ENCODE measurements at regions of chr6 and their contacts with region 1.

Region 1: DNA sequence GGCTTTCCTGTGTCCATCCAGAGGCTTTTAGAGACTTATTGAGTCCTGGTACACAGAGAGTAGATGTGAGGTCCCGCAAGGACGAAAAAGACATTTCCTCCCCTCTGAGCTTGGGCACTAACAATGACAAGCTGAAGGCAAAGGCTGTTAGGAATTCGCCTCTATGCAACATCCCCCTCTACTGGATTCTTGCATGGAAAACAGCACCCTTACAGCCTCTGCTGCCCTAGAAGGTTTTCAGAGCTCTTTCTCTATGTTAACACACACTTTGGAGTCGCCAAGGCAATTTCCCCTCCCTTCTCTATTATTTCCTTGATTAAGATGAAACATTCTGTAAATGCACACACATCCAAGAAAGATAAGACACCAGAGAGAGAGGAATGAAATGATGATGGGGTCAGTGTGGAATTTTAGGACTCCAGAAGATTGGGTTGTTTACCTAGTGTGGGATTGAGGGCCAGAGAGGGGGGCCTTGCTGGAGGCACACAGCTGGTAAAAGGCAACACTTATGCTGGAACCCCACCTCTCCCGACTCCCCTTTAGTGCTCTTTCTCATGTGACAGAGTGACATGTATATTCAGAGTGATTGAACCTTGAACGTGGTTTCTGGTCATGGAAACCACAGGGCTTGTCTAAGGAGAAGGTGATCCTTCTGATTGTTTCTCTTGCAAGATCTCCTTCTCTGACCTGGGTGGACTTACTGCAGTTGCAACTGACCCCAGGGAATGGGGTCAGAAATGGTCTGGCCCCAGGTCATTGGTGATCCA is 300.7 kb downstream of the CLIC5 start:
- DNase-seq: peak; percentile 62
- ATAC-seq: peak; percentile 37
- H3K4me3 Mint-ChIP-seq: no peak overlapping the region
- H3K27ac Mint-ChIP-seq: peak overlapping the region; percentile 90
- H3K4me1 Mint-ChIP-seq: peaks cover 61% of the 10 kb centered on the region
- H3K27me3 Mint-ChIP-seq: no peaks in the 10 kb centered on the region
- CTCF ChIP-seq: peak; percentile 63

Region 2: GRCh38 chr6:44630125-44631028 is 1084.5 kb before region 1 on chr6:
- CTCF ChIA-PET with region 1: interaction called, 10 read pairs
- POLR2A ChIA-PET with region 1: no interaction called
- intact Hi-C with region 1: no loop called
- DNase-seq: peak; percentile 50
- ATAC-seq: peak; percentile 56
- H3K4me3 Mint-ChIP-seq: no peak overlapping the region
- H3K27ac Mint-ChIP-seq: no peak overlapping the region
- H3K4me1 Mint-ChIP-seq: peaks cover 6% of the 10 kb centered on the region
- H3K27me3 Mint-ChIP-seq: no peaks in the 10 kb centered on the region
- CTCF ChIP-seq: peak; percentile 39

Region 3: DNA sequence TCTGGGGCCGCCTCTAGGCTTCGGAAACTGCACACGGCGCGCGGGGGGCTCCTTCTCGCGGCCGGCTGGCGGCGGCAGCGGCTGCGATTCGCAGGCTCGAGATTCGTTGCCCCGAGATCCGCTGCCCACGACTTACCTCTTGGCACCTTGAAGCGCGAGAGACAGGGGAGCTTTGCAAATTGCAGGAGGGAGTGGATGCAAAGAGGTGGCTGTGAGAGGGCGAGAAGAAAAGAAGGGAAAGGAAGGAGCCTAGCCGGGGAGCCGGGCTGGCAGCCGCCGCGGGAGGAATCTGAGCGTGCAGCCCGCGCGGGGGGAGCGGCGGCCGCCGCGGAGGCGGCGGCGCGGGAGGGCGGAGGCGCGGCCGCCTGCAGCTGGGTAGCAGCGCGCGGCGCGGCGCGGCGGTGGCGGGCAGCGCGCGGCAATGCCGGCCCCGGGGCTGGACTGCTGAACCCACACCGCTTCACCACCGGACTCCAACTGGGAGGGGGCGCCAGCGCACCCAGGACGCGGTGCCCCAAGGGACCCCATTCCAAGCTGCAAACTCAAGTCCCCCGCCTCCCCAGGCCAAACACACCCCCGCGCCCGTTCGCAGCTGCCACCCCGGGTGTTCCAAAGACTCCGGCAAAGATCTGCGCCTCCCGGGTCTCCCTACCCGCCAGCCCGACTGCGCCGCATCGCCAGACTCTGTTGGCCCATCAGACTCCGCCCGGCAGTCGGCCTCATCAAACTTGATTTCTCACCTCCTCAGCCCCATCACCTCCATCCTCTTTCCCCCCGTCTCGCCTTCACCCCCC is 293.0 kb before region 1 on chr6:
- CTCF ChIA-PET with region 1: interaction called, 16 read pairs
- POLR2A ChIA-PET with region 1: no interaction called
- intact Hi-C with region 1: no loop called
- DNase-seq: peak; percentile 71
- ATAC-seq: peak; percentile 25
- H3K4me3 Mint-ChIP-seq: peak overlapping the region; percentile 94
- H3K27ac Mint-ChIP-seq: peak overlapping the region; percentile 95
- H3K4me1 Mint-ChIP-seq: peaks cover 29% of the 10 kb centered on the region
- H3K27me3 Mint-ChIP-seq: no peaks in the 10 kb centered on the region
- CTCF ChIP-seq: no peak

Region 4: GRCh38 chr6:45608252-45608911 is 106.5 kb before region 1 on chr6:
- CTCF ChIA-PET with region 1: no interaction called
- POLR2A ChIA-PET with region 1: no interaction called
- intact Hi-C with region 1: loop called (anchors 5 kb)
- DNase-seq: peak; percentile 44
- ATAC-seq: peak; percentile 85
- H3K4me3 Mint-ChIP-seq: no peak overlapping the region
- H3K27ac Mint-ChIP-seq: peak overlapping the region; percentile 75
- H3K4me1 Mint-ChIP-seq: peaks cover 23% of the 10 kb centered on the region
- H3K27me3 Mint-ChIP-seq: no peaks in the 10 kb centered on the region
- CTCF ChIP-seq: no peak

Region 5: DNA sequence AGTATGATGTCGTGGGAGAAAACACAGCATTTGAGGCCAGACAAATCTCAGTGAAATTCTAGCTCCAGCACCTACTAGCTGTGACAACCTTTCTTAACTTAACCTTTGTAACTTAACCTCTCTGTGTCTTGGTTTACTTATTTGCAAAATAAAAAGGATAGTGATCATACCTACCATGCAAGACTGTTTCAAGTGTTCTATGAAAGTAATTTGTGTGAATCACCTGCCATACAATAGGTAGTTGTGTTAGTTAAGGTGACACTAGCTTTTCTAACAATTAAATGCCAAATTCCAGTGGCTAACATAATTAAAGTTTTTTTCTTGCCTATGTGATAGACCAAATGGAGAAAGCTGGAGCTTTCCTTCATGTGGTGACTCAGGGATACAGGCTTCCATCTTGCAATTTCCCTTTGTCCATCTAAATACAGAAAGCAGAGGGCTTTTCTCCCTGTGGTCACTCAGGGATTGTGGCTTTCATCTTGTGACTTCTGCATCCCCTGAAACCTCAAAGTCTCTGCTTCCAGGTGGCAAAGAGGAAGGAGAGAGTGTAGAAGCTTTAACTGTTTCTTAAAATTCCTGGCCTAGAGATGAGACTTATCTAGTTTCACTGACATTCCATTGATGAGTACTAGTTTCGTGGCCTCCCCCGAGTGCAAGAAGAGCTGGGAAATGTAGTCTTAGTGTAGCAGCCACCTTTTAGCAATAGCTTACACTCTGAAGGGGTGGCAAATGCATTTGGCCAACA is 10.7 kb before region 1 on chr6:
- CTCF ChIA-PET with region 1: interaction called, 11 read pairs
- POLR2A ChIA-PET with region 1: interaction called, 4 read pairs
- intact Hi-C with region 1: no loop called
- DNase-seq: no peak
- ATAC-seq: no peak
- H3K4me3 Mint-ChIP-seq: no peak overlapping the region
- H3K27ac Mint-ChIP-seq: peak overlapping the region; percentile 71
- H3K4me1 Mint-ChIP-seq: peaks cover 20% of the 10 kb centered on the region
- H3K27me3 Mint-ChIP-seq: no peaks in the 10 kb centered on the region
- CTCF ChIP-seq: no peak

Region 6: DNA sequence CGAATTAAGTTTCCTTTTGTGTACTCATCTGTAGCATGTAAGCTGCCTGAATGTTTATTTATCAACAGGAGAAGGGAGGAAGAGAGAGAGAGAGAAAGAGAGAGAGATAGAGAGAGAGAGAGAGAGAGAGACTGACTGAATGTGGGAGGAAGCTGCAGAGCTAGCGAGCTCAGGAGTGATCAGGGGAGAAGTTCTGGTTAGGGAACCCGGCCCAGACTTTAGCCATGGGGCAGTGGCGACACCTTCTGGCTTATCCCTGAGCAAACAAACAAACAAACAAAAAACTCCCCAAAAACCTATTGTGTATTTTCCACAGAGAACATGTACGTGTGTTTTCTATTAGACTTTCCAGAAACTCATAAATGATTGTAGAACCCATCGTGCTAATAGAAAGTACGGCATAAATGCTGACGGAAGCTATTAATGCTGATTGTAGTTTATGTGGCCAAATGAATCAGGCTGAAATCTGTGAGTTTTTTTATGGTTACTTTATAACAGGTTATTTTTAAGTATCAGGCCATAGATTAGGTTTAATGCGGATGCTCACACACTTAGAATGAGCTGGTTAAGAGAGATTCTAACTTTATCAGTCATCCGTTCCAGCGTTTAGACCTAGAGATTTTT is 207.9 kb after region 1 on chr6:
- CTCF ChIA-PET with region 1: interaction called, 17 read pairs
- POLR2A ChIA-PET with region 1: no interaction called
- intact Hi-C with region 1: loop called (anchors 2 kb)
- DNase-seq: peak; percentile 77
- ATAC-seq: peak; percentile 20
- H3K4me3 Mint-ChIP-seq: no peak overlapping the region
- H3K27ac Mint-ChIP-seq: peak overlapping the region; percentile 55
- H3K4me1 Mint-ChIP-seq: peaks cover 46% of the 10 kb centered on the region
- H3K27me3 Mint-ChIP-seq: peaks cover 2% of the 10 kb centered on the region
- CTCF ChIP-seq: peak; percentile 82

Measured in activated CD8-positive, alpha-beta T cell treated with anti-CD3 and anti-CD28 coated beads for 36 hours (primary cell).